Pancreas (tissue), 10 donors: ENCODE measurements at regions of chr10 and their contacts with region 1.

Region 1: DNA sequence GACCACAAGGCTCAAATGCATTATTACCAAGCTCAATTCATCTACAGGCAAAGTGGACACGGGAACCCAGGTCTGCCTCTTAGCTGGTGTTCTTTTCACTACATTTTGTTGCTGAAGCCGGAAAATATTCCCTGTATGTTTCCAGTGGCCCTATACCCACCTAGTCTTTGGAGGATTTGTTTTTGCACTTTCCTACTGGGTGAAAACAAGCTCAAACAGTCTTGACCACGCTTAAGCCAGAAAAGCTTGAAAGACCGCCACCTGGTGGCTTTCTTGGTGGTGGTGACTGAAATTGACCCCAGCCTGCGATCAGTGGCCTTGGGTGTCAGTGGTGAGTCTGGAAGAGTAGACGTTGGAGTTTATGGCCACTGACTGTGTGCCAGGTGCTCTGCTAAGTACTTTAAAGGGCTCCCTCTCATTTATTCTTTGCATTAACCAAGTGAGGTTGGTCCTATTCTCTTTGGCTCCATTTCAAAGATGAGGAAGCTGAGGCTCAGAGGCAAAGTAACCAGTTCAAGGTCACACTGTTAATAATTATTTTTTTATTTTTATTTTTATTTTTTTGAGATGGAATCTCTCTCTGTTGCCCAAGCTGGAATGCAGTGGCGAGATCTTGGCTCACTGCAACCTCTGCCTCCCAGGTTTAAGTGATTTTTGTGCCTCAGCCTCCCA is 11.1 kb upstream of the CRTAC1 start:
- DNase-seq: peak in 5 of 6 donors; percentile 52 to 80 (median 63)
- ATAC-seq: peak; percentile 75 to 92 (median 87)
- H3K4me3 ChIP-seq: no peak overlapping the region
- H3K27ac ChIP-seq: no peak overlapping the region
- H3K4me1 ChIP-seq: no peaks in the 10 kb centered on the region
- H3K27me3 ChIP-seq: no peaks in the 10 kb centered on the region
- CTCF ChIP-seq: peak; percentile 53 to 66 (median 62)

Region 2: GRCh38 chr10:97128516-97129154 is 912.9 kb before region 1 on chr10:
- intact Hi-C with region 1: no loop called
- DNase-seq: no peak
- ATAC-seq: peak in 2 of 4 donors; percentile 60 to 63
- H3K4me3 ChIP-seq: no peak overlapping the region
- H3K27ac ChIP-seq: no peak overlapping the region
- H3K4me1 ChIP-seq: no peaks in the 10 kb centered on the region
- H3K27me3 ChIP-seq: no peaks in the 10 kb centered on the region
- CTCF ChIP-seq: no peak

Region 3: DNA sequence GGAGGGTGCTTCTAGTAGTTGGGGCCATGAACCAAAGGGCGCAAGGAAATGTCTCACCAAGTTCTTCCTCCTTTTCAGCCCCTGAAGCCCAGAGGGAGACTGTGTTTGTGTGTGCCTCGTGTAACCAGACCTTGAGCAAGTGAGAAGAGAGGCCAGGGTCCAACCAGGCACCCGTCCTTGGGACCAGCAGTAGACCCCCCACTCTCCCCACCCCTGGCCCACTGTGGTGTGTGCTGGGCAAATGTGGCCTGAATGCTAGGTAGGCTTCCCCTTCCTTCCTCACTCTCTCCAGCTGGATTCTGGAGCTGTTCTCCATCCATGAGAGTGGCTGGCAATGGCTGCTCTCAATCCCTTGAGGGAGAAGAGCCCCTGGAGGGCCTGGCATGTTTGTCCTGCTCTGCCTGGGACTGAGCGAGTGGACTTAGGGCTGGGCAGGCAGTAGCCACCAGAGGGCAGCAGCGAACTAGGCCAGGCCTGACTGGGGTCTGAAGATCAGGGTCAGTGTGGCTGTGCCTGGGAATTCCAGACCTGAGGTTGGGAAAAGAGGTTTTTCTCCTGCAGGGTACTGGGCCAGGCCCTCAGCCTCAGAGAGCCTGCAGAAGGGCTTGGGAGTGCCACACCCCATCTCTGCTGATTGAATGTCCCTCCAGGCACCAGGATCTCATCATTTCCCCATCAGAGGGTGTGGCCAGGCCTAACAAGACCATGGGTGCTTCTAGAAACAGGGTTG is 282.2 kb before region 1 on chr10:
- intact Hi-C with region 1: loop called in 1 of 3 experiments (anchors 5 kb)
- DNase-seq: peak; percentile 62 to 90 (median 82)
- ATAC-seq: peak; percentile 66 to 94 (median 87)
- H3K4me3 ChIP-seq: no peak overlapping the region
- H3K27ac ChIP-seq: no peak overlapping the region
- H3K4me1 ChIP-seq: peaks cover 0 to 6% (median 0%) of the 10 kb centered on the region in 3 donors
- H3K27me3 ChIP-seq: no peaks in the 10 kb centered on the region
- CTCF ChIP-seq: peak; percentile 79 to 89 (median 86)

Region 4: GRCh38 chr10:97914837-97915211 is 126.7 kb before region 1 on chr10:
- intact Hi-C with region 1: loop called in 2 of 3 experiments (anchors 5 kb)
- DNase-seq: peak; percentile 79 to 94 (median 90)
- ATAC-seq: peak; percentile 92 to 97 (median 96)
- H3K4me3 ChIP-seq: no peak overlapping the region
- H3K27ac ChIP-seq: no peak overlapping the region
- H3K4me1 ChIP-seq: no peaks in the 10 kb centered on the region
- H3K27me3 ChIP-seq: no peaks in the 10 kb centered on the region
- CTCF ChIP-seq: peak; percentile 93 to 97 (median 94)

Region 5: GRCh38 chr10:97939446-97939990 is 102.0 kb before region 1 on chr10:
- intact Hi-C with region 1: no loop called
- DNase-seq: peak in 1 of 6 donors; percentile 12
- ATAC-seq: no peak
- H3K4me3 ChIP-seq: no peak overlapping the region
- H3K27ac ChIP-seq: no peak overlapping the region
- H3K4me1 ChIP-seq: no peaks in the 10 kb centered on the region
- H3K27me3 ChIP-seq: no peaks in the 10 kb centered on the region
- CTCF ChIP-seq: no peak

Region 6: GRCh38 chr10:99346247-99346646 is 1304.7 kb after region 1 on chr10:
- intact Hi-C with region 1: no loop called
- DNase-seq: no peak
- ATAC-seq: no peak
- H3K4me3 ChIP-seq: no peak overlapping the region
- H3K27ac ChIP-seq: no peak overlapping the region
- H3K4me1 ChIP-seq: no peaks in the 10 kb centered on the region
- H3K27me3 ChIP-seq: no peaks in the 10 kb centered on the region
- CTCF ChIP-seq: no peak